ENCODE measurements at regions of chr12 and their contacts with region 1.

Region 1: DNA sequence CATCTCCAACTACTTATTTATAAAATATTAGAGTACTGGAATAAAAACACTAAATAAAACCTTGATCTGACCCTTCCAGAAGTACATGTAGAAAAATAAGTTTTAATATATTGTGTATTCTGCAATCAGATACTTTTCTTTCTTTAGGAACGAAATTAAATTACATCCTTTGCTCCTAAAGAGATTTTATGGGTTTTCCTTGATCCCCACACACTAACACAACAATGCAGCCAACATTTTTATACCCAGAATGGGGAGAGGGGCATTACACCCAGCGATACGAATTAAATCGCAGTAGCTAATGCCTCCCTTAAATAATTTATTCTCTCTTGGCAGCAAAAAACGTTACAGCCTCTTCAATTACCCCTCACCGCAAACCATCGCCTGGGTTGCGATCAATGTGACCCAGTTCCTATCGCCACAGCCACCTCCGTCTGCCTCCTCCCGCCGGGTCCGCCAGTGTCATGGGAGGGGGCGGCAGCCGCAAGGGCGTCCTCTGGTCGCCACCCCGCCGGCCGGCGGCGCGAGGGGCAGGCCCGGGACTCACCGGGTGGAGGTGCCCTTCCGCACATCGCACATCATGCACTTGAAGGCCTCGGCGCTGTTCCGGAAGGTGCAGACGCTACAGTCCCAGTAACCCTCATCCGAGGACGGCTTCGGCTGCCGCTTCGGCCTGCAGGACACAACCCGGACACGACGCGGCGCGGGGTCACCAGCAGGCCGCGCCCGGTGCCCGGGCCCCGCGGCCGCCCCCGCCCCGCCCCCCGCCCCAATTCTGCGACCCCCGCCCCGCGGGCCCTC is 796 bp downstream of the YAF2 start:
- DNase-seq: peak; percentile 41
- ATAC-seq: peak; percentile 84
- H3K4me3 ChIP-seq: peak overlapping the region; percentile 59 to 70
- H3K27ac ChIP-seq: peak overlapping the region; percentile 88
- H3K4me1 ChIP-seq: peaks cover 0 to 15% of the 10 kb centered on the region in 2 experiments; a peak in 2 of 4 replicates
- H3K27me3 ChIP-seq: no peaks in the 10 kb centered on the region
- CTCF ChIP-seq: peak in 2 of 3 experiments; percentile 41 to 47; a peak in 4 of 6 replicates
- POLR2A ChIP-seq: no peak
- RAD21 ChIP-seq: no peak

Region 2: DNA sequence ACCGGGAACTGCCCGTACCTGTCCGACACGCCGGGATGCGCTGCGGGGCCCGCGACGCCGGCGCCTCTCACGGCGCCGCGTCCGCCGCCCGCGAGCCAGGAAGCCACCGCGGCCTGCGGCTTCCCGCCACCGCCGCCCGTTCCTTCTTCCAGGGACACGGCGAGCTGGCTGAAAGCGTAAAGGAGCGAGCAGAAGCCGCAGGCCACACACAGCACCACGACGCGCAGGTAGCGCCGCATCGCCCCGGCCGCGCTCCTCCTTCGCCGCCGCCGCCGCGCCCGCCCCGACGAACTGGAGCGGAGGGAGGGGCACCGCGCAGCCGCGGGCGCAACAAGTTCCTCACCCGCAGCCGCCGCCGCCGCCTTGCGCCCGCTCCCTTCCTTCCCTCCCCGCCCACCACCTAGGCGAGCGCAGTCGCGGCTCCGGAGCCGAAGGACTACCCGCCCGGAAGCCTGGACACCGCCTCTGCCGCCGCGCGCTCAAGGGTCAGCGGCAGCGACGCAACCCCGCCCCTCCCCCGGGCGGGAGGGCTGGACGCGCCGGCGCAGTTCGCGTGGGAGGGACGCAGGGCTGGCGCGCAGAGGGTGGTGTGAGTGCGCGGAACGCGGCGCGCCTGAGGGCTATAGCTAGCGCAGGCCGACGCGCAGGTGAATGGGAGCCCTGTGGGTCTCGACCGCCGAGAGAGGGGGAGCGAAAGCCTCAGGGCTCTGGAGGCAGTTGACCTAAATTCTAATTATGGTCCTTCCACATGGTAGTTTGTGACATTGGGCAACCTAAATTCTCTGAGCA is 92.7 kb before region 1 on chr12 and contains the start of gene GXYLT1:
- CTCF ChIA-PET with region 1: no interaction called
- POLR2A ChIA-PET with region 1: no interaction called
- RAD21 ChIA-PET with region 1: no interaction called
- intact Hi-C with region 1: loop called (anchors 2 kb)
- DNase-seq: peak; percentile 88
- ATAC-seq: peak; percentile 95
- H3K4me3 ChIP-seq: peak within 1 kb of the TSS; percentile 67 to 80
- H3K27ac ChIP-seq: peak within 1 kb of the TSS; percentile 88
- H3K4me1 ChIP-seq: peaks cover 7 to 27% of the 10 kb centered on the region in 2 experiments; a peak in 3 of 4 replicates
- H3K27me3 ChIP-seq: no peaks in the 10 kb centered on the region
- CTCF ChIP-seq: no peak
- POLR2A ChIP-seq: peak; percentile 56
- RAD21 ChIP-seq: no peak
- total RNA-seq, gene GXYLT1: 9.0 TPM

Region 3: GRCh38 chr12:42299392-42300308 is 62.4 kb after region 1 on chr12:
- CTCF ChIA-PET with region 1: no interaction called
- POLR2A ChIA-PET with region 1: no interaction called
- RAD21 ChIA-PET with region 1: no interaction called
- intact Hi-C with region 1: no loop called
- DNase-seq: no peak
- ATAC-seq: no peak
- H3K4me3 ChIP-seq: no peak overlapping the region
- H3K27ac ChIP-seq: no peak overlapping the region
- H3K4me1 ChIP-seq: no peaks in the 10 kb centered on the region
- H3K27me3 ChIP-seq: no peaks in the 10 kb centered on the region
- CTCF ChIP-seq: no peak
- POLR2A ChIP-seq: no peak
- RAD21 ChIP-seq: no peak

Region 4: DNA sequence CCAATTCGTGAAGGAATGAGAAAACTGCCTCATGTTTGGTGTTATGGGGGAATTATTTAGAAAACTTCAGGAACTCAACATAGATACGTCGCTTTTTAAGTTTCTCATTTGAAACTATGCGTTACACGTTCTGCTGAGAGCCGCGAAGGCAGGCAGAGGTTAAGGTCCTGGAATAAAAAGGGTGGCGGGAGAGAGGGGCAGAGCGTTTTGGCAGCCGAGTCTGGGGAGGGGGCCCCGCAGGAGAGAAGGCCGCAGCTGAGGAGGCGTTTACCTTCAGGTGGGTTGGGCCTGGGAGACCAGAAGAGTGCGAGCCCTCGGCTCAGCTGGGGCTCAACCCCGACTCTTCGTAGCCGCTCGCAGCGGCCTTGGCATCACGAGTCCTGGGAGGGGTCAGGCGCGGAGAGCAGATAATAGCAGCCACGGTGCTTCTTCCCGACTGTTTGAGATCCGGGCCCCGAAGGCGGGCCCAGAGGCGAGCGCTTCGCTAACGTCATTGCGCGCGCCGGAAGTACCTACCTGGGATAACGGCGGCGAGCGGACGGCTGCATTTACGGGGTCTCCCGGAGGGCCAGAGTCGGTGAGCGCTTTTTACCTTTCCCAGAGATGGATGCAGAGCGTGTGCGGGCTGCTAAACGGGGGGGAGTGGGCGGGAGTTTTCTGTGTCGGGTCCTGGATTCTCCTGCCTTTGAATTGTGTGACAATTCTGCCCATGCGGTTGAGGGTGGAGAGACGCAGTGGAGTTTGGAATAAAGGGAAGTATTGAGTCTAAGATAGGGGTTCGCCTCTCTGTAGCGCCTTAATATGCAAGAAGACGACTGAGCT is 88.6 kb after region 1 on chr12 and contains the starts of genes PPHLN1 and ZCRB1:
- CTCF ChIA-PET with region 1: no interaction called
- POLR2A ChIA-PET with region 1: interaction called, 3 read pairs
- RAD21 ChIA-PET with region 1: no interaction called
- intact Hi-C with region 1: loop called (anchors 5 kb)
- DNase-seq: peak; percentile 51
- ATAC-seq: peak; percentile 97
- H3K4me3 ChIP-seq: peak within 1 kb of the TSS; percentile 69 to 92
- H3K27ac ChIP-seq: peak within 1 kb of the TSS; percentile 53
- H3K4me1 ChIP-seq: peaks cover 9 to 16% of the 10 kb centered on the region in 2 experiments; a peak in 3 of 4 replicates
- H3K27me3 ChIP-seq: no peaks in the 10 kb centered on the region
- CTCF ChIP-seq: no peak
- POLR2A ChIP-seq: peak; percentile 76
- RAD21 ChIP-seq: no peak
- total RNA-seq, gene PPHLN1: 57.4 TPM
- total RNA-seq, gene ZCRB1: 68.1 TPM

Measured in HCT116 (cell line).